ENCODE measurements at regions of chr5 and their contacts with region 1.

Region 1: GRCh38 chr5:6722015-6722414 is 8.8 kb downstream of the TENT4A start:
- DNase-seq: peak; percentile 52
- H3K4me3 ChIP-seq: peak overlapping the region; percentile 51
- H3K27ac ChIP-seq: peak overlapping the region; percentile 34
- H3K4me1 ChIP-seq: peaks cover 78% of the 10 kb centered on the region
- CTCF ChIP-seq: no peak

Region 2: GRCh38 chr5:5752844-5753243 is 969.2 kb before region 1 on chr5:
- CTCF ChIA-PET with region 1: no interaction called
- POLR2A ChIA-PET with region 1: no interaction called
- intact Hi-C with region 1: loop called (anchors 5 kb)
- DNase-seq: peak; percentile 68
- H3K4me3 ChIP-seq: peak overlapping the region; percentile 39
- H3K27ac ChIP-seq: peak overlapping the region; percentile 75
- H3K4me1 ChIP-seq: peaks cover 79% of the 10 kb centered on the region
- CTCF ChIP-seq: no peak

Region 3: DNA sequence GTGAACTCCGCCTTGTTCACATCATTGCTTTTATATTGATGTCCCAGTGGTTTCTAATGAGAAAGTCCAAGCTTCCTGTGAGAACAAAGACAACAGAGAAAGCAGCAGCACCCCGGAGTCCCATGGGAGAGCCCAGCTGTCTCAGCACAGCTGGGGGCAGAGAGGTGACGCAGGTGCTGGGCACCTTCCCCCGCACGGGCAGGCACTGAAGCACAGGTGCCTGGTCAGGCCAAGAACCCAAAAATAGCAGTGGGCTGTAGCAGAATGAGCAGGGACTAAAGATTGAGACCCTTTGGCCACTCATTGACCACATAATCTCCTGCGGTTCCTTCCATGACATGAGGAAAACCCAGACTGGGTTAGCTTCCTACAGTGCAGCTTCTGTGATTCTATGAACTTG is 70.0 kb before region 1 on chr5:
- CTCF ChIA-PET with region 1: no interaction called
- POLR2A ChIA-PET with region 1: interaction called, 3 read pairs
- intact Hi-C with region 1: loop called (anchors 2 kb)
- DNase-seq: peak; percentile 94
- H3K4me3 ChIP-seq: peak overlapping the region; percentile 55
- H3K27ac ChIP-seq: peak overlapping the region; percentile 61
- H3K4me1 ChIP-seq: peaks cover 47% of the 10 kb centered on the region
- CTCF ChIP-seq: no peak

Region 4: DNA sequence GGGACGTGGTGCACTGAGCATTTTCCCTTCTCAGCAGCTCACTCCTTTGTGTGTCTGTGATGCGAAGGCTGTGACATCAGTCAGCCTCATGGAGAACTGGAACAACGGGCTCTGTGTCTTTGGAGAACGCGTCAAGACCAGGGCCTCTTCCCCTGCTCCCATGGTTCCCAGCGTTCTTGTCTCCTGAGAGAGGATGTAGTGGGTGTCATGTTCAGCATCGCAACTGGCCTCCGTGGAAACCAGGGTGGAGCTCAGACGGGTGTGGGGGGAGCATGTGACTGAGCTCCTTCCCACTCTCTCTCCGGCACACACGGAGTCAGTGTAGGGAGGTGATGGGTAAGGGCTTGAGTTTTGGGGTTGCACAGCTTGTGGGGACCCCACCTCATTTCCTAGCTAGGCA is 50.9 kb after region 1 on chr5:
- CTCF ChIA-PET with region 1: no interaction called
- POLR2A ChIA-PET with region 1: no interaction called
- intact Hi-C with region 1: no loop called
- DNase-seq: no peak
- H3K4me3 ChIP-seq: no peak overlapping the region
- H3K27ac ChIP-seq: no peak overlapping the region
- H3K4me1 ChIP-seq: no peaks in the 10 kb centered on the region
- CTCF ChIP-seq: no peak